Activated CD4-positive, alpha-beta memory T cell treated with anti-CD3 and anti-CD28 coated beads for 36 hours (primary cell): ENCODE measurements at regions of chr13 and their contacts with region 1.

Region 1: DNA sequence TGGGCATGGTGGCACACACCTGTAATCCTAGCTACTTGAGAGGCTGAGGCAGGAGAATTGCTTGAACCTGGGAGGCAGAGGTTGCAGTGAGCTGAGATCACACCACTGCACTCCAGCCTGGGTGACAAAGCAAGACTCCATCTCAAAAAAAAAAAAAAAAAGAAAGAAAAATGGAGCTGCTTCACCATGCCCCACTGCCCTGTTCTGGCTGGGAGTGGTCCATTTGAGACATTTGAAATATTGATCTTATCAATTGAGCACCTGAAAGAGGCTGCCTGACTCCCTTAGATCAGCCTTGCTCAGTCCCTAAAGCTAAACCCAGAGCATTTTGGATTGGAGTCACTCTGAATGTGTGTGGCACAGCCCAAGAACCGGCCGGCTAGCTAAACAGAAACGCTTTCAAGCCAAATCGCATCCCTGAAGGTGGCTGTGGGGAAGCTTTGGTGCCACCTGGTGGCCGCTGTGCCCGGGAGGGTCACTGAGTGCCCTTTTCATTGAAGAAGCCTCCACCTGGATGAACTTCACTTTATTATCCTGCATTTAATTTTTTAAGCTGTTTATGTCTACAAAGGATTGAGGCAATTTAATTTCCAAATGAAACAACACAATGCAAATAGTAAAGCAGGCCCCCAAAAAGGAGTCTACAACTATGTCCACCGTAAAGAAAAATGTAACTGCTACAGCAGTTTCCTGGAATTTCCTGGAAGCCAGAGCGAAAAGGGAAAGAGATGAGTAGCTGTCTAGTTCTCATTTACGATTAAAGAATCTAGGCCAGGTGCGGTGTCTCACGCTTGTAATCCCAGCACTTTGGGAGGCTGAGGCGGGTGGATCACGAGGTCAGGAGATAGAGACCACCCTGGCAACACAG is 53.1 kb upstream of the SERPINE3 start:
- DNase-seq: peak; percentile 85
- H3K4me3 Mint-ChIP-seq: no peak overlapping the region
- H3K27ac Mint-ChIP-seq: no peak overlapping the region
- H3K4me1 Mint-ChIP-seq: no peaks in the 10 kb centered on the region
- H3K27me3 Mint-ChIP-seq: no peaks in the 10 kb centered on the region

Region 2: DNA sequence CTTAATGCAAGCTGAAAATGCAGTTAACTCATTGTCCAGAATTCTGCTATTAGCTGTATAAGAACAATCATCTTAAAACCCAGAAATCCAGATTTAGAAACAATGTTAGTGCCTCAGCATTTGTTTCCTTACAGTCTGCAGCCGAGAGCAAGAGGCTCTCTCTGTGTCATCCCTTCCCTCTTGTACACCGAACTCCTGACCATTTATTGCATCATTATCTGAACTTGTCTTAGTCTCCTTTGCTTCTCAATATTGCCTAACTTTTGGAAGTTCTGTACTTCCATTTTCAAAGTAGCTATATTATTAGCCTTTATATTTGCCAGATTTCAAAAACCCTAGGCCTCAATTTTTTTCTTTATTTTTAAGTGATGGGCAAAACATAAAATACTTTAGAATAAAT is 349.7 kb before region 1 on chr13:
- CTCF ChIA-PET with region 1: no interaction called
- POLR2A ChIA-PET with region 1: no interaction called
- intact Hi-C with region 1: no loop called
- DNase-seq: no peak
- H3K4me3 Mint-ChIP-seq: no peak overlapping the region
- H3K27ac Mint-ChIP-seq: no peak overlapping the region
- H3K4me1 Mint-ChIP-seq: no peaks in the 10 kb centered on the region
- H3K27me3 Mint-ChIP-seq: no peaks in the 10 kb centered on the region

Region 3: GRCh38 chr13:51125498-51126226 is 160.7 kb before region 1 on chr13:
- CTCF ChIA-PET with region 1: interaction called, 244 read pairs
- POLR2A ChIA-PET with region 1: interaction called, 4 read pairs
- intact Hi-C with region 1: loop called (anchors 1 kb)
- DNase-seq: peak; percentile 60
- H3K4me3 Mint-ChIP-seq: no peak overlapping the region
- H3K27ac Mint-ChIP-seq: no peak overlapping the region
- H3K4me1 Mint-ChIP-seq: peaks cover 16% of the 10 kb centered on the region
- H3K27me3 Mint-ChIP-seq: peaks cover 15% of the 10 kb centered on the region

Region 4: GRCh38 chr13:51222037-51222685 is 64.2 kb before region 1 on chr13 and contains the start of gene FAM124A:
- CTCF ChIA-PET with region 1: interaction called, 19 read pairs
- POLR2A ChIA-PET with region 1: no interaction called
- intact Hi-C with region 1: loop called (anchors 5 kb)
- DNase-seq: peak; percentile 60
- H3K4me3 Mint-ChIP-seq: peak within 1 kb of the TSS; percentile 70
- H3K27ac Mint-ChIP-seq: no peak within 1 kb of the TSS
- H3K4me1 Mint-ChIP-seq: peaks cover 2% of the 10 kb centered on the region
- H3K27me3 Mint-ChIP-seq: peaks cover 53% of the 10 kb centered on the region
- total RNA-seq, gene FAM124A: 0.15 to 0.24 TPM

Region 5: DNA sequence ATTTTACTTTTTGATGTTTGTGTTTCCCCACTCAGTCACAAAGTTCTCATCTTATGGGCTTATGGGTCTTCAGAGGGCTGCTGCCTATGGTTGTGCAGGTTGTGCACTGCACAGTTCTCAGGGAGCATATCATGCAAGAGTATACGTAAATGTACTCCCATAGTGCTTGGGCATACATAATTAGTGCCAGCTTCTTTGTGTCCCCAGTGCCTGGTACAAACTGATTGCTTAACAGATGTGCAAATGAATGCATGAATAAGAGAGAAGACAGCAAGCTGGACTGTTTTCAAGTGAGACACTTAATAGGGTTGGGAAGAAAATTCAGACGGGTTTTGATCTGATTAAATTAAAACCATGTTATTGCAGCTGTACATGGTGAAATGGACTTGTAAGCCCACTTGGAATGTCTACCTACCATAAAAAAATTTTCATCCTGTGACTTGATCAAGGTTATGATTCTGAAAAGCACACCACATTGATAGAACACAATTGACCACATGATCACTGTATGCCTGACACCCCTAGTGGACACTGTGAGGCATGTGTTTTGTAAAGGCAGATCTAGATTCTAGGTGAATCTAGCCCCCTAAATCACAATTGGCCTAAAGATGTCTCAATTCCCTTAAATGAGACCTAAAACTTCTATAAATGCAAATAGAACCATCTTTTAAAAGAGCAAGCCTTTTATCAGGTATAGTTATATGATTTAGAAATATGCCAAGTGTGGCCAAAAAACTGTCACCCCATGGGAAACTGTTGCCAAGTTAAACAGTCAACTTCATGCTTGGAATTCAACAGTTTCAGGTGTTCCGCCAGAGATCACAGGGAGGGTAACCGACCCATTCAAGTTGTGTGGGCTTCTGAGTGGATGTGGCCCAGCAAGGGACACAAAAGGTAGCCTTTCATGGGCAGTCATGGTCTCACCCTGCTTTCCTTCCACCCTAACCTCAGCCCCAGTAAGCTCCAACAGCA is 36.3 kb before region 1 on chr13:
- CTCF ChIA-PET with region 1: interaction called, 12 read pairs
- POLR2A ChIA-PET with region 1: no interaction called
- intact Hi-C with region 1: no loop called
- DNase-seq: no peak
- H3K4me3 Mint-ChIP-seq: no peak overlapping the region
- H3K27ac Mint-ChIP-seq: no peak overlapping the region
- H3K4me1 Mint-ChIP-seq: no peaks in the 10 kb centered on the region
- H3K27me3 Mint-ChIP-seq: peaks cover 5% of the 10 kb centered on the region

Region 6: GRCh38 chr13:51275101-51275500 is 11.3 kb before region 1 on chr13:
- CTCF ChIA-PET with region 1: interaction called, 22 read pairs
- POLR2A ChIA-PET with region 1: no interaction called
- intact Hi-C with region 1: no loop called
- DNase-seq: no peak
- H3K4me3 Mint-ChIP-seq: no peak overlapping the region
- H3K27ac Mint-ChIP-seq: no peak overlapping the region
- H3K4me1 Mint-ChIP-seq: no peaks in the 10 kb centered on the region
- H3K27me3 Mint-ChIP-seq: peaks cover 1% of the 10 kb centered on the region

Region 7: GRCh38 chr13:51303063-51303552 is 16.7 kb after region 1 on chr13:
- CTCF ChIA-PET with region 1: interaction called, 34 read pairs
- POLR2A ChIA-PET with region 1: no interaction called
- intact Hi-C with region 1: no loop called
- DNase-seq: no peak
- H3K4me3 Mint-ChIP-seq: no peak overlapping the region
- H3K27ac Mint-ChIP-seq: no peak overlapping the region
- H3K4me1 Mint-ChIP-seq: no peaks in the 10 kb centered on the region
- H3K27me3 Mint-ChIP-seq: peaks cover 3% of the 10 kb centered on the region